Activated B cell treated with CpG ODN at 0.5 μM for 24 hours (primary cell): ENCODE measurements at regions of chr9 and their contacts with region 1.

Region 1: GRCh38 chr9:4984621-4985385 is at the start of gene JAK2:
- DNase-seq: peak; percentile 83
- ATAC-seq: peak; percentile 80
- H3K4me3 Mint-ChIP-seq: peak within 1 kb of the TSS; percentile 87
- H3K27ac Mint-ChIP-seq: peak within 1 kb of the TSS; percentile 95
- H3K4me1 Mint-ChIP-seq: peaks cover 48% of the 10 kb centered on the region
- H3K27me3 Mint-ChIP-seq: no peaks in the 10 kb centered on the region
- CTCF ChIP-seq: no peak
- total RNA-seq, gene JAK2: 19.2 and 21.3 TPM in 2 replicates

Region 2: DNA sequence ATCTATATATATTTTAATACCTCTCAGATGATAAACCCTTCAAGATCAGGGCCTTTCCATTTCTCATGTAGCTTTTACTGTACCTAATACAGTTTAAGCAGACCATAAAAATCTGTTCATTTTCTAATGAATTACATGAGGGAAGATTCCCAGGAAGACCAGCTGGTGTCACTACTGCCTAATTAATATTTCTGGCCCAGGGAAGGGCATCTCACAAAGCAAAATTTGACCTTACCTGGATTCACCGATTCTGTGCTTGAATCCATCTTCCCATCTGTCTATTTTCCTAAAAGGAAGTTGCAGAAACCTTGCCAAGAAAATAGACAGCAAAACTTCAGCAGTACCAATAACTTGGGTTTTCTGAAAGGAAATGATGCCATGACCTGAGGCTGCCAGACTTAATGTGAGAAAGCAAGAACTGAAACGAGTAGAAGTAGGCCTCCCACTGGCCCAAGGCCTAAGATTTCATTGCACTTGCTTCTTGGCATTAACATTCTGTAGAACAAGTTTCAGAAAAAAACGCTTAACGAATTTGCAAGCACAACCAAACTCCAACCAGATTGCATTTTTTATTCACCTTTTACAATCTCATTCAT is 602.0 kb before region 1 on chr9:
- CTCF ChIA-PET with region 1: no interaction called
- POLR2A ChIA-PET with region 1: no interaction called
- intact Hi-C with region 1: loop called (anchors 2 kb)
- DNase-seq: no peak
- ATAC-seq: no peak
- H3K4me3 Mint-ChIP-seq: no peak overlapping the region
- H3K27ac Mint-ChIP-seq: no peak overlapping the region
- H3K4me1 Mint-ChIP-seq: no peaks in the 10 kb centered on the region
- H3K27me3 Mint-ChIP-seq: peaks cover 8% of the 10 kb centered on the region
- CTCF ChIP-seq: no peak

Region 3: DNA sequence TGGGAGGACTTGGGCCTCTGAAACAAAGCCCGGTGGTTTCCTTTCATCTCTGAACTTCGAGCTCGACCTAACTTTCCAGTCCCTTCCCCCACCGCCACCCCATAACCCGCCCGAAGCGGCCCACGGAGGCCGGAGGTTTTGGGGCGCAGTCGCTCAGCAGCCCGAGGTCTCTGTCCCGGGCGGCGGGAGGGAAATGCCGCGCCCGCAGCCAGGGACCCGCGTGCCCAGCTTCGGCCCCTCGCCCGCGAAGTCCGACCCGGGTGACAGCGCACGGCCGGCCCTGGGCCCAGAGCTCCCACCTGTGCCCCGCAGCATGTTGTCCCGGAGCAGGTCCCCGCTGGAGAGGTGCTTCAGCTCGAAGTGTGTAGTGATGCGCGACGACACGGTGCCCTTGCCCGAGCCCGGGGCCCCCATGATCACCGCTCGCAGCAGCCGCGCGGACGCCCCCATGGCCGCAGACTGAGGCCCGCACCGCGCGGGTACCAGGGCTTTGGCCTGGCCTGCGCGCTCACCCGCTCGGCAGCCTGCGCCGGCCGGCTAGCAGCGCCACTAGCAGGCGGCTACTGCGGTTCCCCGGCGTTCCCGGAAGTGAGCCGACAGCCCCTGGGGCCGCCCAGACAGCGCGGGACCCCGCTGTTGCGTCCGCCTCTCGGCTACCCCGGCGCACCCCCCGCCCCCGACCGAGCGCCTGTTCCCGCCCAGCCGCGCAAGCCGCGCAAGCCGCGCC is 244.0 kb before region 1 on chr9 and contains the start of gene AK3:
- CTCF ChIA-PET with region 1: no interaction called
- POLR2A ChIA-PET with region 1: interaction called, 7 read pairs
- intact Hi-C with region 1: loop called (anchors 1 kb)
- DNase-seq: peak; percentile 79
- ATAC-seq: peak; percentile 93
- H3K4me3 Mint-ChIP-seq: peak within 1 kb of the TSS; percentile 90
- H3K27ac Mint-ChIP-seq: peak within 1 kb of the TSS; percentile 83
- H3K4me1 Mint-ChIP-seq: peaks cover 30% of the 10 kb centered on the region
- H3K27me3 Mint-ChIP-seq: no peaks in the 10 kb centered on the region
- CTCF ChIP-seq: no peak
- total RNA-seq, gene AK3: 14.5 and 16.9 TPM in 2 replicates

Region 4: DNA sequence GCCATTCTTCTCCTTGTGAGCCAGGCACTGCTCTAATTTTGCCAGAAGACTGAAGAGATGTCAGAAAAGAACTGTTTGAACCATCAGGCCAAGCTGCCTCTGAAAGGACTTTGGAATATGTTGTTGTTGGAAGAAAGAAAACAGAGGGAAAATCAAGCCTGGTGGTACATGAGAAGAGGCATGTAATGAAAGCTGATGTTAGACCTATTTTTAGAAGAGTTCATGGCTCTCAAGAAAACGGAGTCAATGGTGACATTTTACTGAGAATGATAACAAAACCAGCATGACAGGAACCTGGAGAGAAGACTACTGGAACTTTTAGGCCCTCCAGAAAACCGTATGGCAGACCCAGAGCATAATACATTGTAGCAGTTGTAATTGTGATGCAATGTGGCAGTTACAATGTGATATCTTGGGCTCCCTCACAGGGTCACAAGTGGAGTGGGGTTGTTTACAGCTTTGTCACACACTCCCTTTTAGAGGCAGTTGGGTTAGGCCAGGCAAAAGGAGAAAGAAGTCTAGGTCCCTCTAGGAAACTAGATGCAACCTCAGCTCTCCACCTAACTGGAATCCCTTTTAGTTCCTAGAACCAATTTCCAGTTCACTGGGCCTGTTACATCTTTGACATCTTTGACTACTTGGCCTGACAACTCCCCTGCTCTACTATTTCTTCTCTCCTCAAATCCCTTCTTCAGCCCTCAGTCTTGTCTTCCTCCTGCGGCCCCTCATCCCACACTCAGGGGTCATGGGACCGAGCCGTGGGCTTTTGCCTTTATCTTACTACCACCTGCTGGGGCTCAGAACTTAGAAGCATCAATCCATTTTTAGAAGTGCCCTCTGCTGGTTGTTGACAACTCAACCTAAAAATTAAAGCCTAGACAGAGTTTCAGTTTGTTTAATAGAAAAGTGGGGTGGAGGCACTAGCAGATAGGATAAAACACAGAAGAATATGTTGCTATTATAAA is 60.9 kb before region 1 on chr9:
- CTCF ChIA-PET with region 1: interaction called, 6 read pairs
- POLR2A ChIA-PET with region 1: interaction called, 3 read pairs
- intact Hi-C with region 1: loop called (anchors 1 kb)
- DNase-seq: no peak
- ATAC-seq: peak; percentile 52
- H3K4me3 Mint-ChIP-seq: no peak overlapping the region
- H3K27ac Mint-ChIP-seq: no peak overlapping the region
- H3K4me1 Mint-ChIP-seq: peaks cover 11% of the 10 kb centered on the region
- H3K27me3 Mint-ChIP-seq: no peaks in the 10 kb centered on the region
- CTCF ChIP-seq: no peak

Region 5: GRCh38 chr9:5062631-5063030 is 77.8 kb after region 1 on chr9:
- CTCF ChIA-PET with region 1: no interaction called
- POLR2A ChIA-PET with region 1: no interaction called
- intact Hi-C with region 1: no loop called
- DNase-seq: no peak
- ATAC-seq: no peak
- H3K4me3 Mint-ChIP-seq: no peak overlapping the region
- H3K27ac Mint-ChIP-seq: no peak overlapping the region
- H3K4me1 Mint-ChIP-seq: no peaks in the 10 kb centered on the region
- H3K27me3 Mint-ChIP-seq: no peaks in the 10 kb centered on the region
- CTCF ChIP-seq: no peak

Region 6: GRCh38 chr9:5112109-5112592 is 127.3 kb after region 1 on chr9:
- CTCF ChIA-PET with region 1: no interaction called
- POLR2A ChIA-PET with region 1: no interaction called
- intact Hi-C with region 1: no loop called
- DNase-seq: no peak
- ATAC-seq: no peak
- H3K4me3 Mint-ChIP-seq: no peak overlapping the region
- H3K27ac Mint-ChIP-seq: no peak overlapping the region
- H3K4me1 Mint-ChIP-seq: no peaks in the 10 kb centered on the region
- H3K27me3 Mint-ChIP-seq: no peaks in the 10 kb centered on the region
- CTCF ChIP-seq: no peak

Region 7: GRCh38 chr9:5628530-5629311 is 643.9 kb after region 1 on chr9 and contains the start of gene RIC1:
- CTCF ChIA-PET with region 1: no interaction called
- POLR2A ChIA-PET with region 1: interaction called, 12 read pairs
- intact Hi-C with region 1: loop called (anchors 2 kb)
- DNase-seq: peak; percentile 88
- ATAC-seq: peak; percentile 75
- H3K4me3 Mint-ChIP-seq: peak within 1 kb of the TSS; percentile 100
- H3K27ac Mint-ChIP-seq: peak within 1 kb of the TSS; percentile 100
- H3K4me1 Mint-ChIP-seq: peaks cover 78% of the 10 kb centered on the region
- H3K27me3 Mint-ChIP-seq: no peaks in the 10 kb centered on the region
- CTCF ChIP-seq: no peak
- total RNA-seq, gene RIC1: 68.1 and 85.0 TPM in 2 replicates

Region 8: DNA sequence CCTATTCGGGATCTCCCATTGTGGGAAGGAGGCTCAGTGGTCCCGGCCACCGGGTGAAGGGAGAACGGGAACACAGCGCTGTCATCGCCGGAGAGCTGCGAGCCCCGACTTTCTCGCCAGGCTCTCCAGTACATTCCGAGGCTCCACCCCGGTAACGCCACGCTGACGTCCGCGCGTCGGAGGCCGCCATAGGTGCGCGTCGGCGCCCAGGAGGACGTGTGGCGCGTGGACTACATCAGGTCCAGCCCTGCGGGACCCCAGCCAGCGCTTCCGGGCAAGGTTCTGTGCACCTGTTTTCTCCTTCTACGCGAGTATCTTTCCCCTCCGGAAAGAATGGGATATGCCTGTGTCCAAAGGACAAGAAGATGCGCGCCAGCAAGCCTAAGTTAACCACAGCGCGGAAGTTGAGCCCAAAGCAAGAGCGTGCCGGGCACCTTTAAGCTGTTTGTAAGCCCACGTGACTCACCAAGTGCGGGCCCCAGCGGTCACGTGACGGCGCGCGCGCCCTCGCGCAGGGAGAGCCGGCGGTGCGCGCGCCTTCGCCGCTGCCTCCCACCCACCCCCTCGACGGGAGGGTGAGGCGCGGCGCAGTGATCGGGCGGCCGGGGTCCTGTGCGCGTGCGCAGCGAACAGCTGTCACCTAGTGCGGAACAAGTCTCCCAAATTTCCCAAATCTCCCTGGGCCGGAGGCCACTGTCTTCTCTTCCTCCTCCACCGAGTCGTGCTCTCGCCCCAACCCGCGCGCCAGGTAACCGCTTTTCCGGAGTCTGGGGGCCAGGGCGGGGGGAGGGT is 1772.8 kb after region 1 on chr9 and contains the start of gene KDM4C:
- CTCF ChIA-PET with region 1: no interaction called
- POLR2A ChIA-PET with region 1: no interaction called
- intact Hi-C with region 1: loop called (anchors 10 kb)
- DNase-seq: peak; percentile 92
- ATAC-seq: peak; percentile 75
- H3K4me3 Mint-ChIP-seq: peak within 1 kb of the TSS; percentile 99
- H3K27ac Mint-ChIP-seq: peak within 1 kb of the TSS; percentile 100
- H3K4me1 Mint-ChIP-seq: peaks cover 39% of the 10 kb centered on the region
- H3K27me3 Mint-ChIP-seq: no peaks in the 10 kb centered on the region
- CTCF ChIP-seq: no peak
- total RNA-seq, gene KDM4C: 90.7 and 113 TPM in 2 replicates